ENCODE measurements at regions of chr15 and their contacts with region 1.

Region 1: DNA sequence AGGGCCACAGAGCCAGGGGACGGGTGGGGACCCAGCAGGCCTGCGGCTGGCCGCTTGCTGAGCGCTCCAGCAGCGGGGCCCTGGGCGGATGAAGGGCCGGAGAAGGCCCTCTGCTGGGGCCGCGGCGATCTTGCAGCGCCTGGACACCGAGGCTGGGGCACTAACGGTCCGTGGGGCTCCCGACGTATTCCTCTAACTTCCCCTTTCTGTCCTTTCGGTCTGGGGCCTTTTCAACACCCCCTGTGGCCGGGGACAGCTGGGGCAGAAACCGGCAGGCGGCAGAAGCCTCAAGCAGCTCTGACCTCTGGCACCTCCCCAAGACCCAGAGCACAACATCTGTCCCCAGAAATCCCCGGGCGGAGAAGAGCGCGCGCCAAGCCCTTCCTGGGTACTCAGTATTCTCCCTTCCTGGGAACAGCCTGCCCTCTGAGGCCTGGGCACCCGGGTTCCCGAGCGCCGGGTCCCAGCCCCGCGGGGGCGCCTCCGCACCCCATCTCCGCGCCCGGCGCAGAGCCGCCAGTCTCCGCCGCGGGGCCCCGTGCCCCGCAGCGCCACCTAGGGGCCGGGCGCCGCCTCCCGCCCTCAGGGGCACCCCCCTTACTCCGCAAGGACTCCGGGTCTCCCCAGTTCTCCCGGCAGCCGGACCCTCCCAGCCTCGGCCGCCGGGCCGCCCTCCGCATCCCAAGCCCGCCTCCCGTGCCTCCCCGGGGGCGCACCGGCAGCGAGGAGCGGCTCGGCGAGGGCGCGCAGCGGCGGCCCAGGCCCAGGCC is 582 bp upstream of the SLCO3A1 start:
- DNase-seq: peak; percentile 27
- H3K4me3 ChIP-seq: peak overlapping the region; percentile 75 to 80 (median 76)
- H3K27ac ChIP-seq: peak overlapping the region; percentile 95 to 98 (median 96)
- H3K4me1 ChIP-seq: peaks cover 34 to 65% (median 36%) of the 10 kb centered on the region in 3 donors
- H3K27me3 ChIP-seq: no peaks in the 10 kb centered on the region
- CTCF ChIP-seq: peak; percentile 39 to 95 (median 86)
- POLR2A ChIP-seq: no peak

Region 2: DNA sequence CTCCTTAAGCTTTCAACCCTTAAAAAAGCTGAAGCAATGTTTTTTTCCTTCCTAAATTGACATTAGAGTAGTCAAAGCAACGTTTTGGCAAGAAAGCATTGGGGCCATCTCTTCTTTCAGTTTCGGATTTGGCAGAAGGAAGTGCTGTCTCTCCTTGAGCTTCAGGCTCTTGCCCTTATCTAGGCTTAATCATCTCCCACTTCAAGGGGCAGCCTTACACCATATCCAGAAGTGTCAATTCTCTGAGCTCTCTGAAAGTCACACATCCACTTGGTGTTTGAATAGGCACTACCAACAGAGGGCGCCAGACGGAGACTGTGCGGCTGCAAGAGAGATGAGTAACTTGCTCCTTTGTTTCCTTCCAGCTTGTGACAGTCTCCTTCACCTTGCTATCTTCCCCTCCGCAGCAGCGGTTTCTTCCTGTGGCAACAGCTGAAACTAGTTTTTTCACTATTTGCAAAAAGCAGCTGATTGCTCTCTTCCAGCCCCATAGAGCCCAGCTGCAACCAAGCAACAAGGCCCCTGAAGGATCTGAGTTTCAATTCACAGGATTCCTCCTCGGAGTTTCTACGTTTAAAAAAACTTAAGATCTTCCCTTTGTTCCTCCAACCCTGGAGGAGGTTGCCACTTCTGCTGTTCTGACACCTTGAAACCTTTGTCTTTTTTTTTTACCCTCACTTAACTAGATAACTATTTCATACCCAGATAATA is 146.4 kb before region 1 on chr15:
- intact Hi-C with region 1: loop called (anchors 10 kb)
- DNase-seq: no peak
- H3K4me3 ChIP-seq: peak overlapping the region in 1 of 4 donors; percentile 3
- H3K27ac ChIP-seq: peak overlapping the region in 2 of 4 donors; percentile 3 to 11
- H3K4me1 ChIP-seq: peaks cover 0 to 11% (median 4%) of the 10 kb centered on the region in 3 donors
- H3K27me3 ChIP-seq: no peaks in the 10 kb centered on the region
- CTCF ChIP-seq: peak; percentile 39 to 92 (median 84)
- POLR2A ChIP-seq: no peak

Region 3: GRCh38 chr15:91954201-91954673 is 101.3 kb after region 1 on chr15:
- intact Hi-C with region 1: loop called (anchors 5 kb)
- DNase-seq: no peak
- H3K4me3 ChIP-seq: no peak overlapping the region
- H3K27ac ChIP-seq: peak overlapping the region; percentile 71 to 91 (median 82)
- H3K4me1 ChIP-seq: peaks cover 42 to 78% (median 67%) of the 10 kb centered on the region in 3 donors
- H3K27me3 ChIP-seq: no peaks in the 10 kb centered on the region
- CTCF ChIP-seq: peak in 4 of 6 experiments; percentile 18 to 61 (median 49)
- POLR2A ChIP-seq: no peak